Activated naive CD4-positive, alpha-beta T cell treated with anti-CD3 and anti-CD28 coated beads for 36 hours (primary cell): ENCODE measurements at regions of chr7 and their contacts with region 1.

Region 1: GRCh38 chr7:101688183-101688831 is 59.2 kb upstream of the MYL10 start:
- DNase-seq: peak; percentile 84
- H3K4me3 Mint-ChIP-seq: no peak overlapping the region
- H3K27ac Mint-ChIP-seq: no peak overlapping the region
- H3K4me1 Mint-ChIP-seq: no peaks in the 10 kb centered on the region
- H3K27me3 Mint-ChIP-seq: no peaks in the 10 kb centered on the region

Region 2: DNA sequence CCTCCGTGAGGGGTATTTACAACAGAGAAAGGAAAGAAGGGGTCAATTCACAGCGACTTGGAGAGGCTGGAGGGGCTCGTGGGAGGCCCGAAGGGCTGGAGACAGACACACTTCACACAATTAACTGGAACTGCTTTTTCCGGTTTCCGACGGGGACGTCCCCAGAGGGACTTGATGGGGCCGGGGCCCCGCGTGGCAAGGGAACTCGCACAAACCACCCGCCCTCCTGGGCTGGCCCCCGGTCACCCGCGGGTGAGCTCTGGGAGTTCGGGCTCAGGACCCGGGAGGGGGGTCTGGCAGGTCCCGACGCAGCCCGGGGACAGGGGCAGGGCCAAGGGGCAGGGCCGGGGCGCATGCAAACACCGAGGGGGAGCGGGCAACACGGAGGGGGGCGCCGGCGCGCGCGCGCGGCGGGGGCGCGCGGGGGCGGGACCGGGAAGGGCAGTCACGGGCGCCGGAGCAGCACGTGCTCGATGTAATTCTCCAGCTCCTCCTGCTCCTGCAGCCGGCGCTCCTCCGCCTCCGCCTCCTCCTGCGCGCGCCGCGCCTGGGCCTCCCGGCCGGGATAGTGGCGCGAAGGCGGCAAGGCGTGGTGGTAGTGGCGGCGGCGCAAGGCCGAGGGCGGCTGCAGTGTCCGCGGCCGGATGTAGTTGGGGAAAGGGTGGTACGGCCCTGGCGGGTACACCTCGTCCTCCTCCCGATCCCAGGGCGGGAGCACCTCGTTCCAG is 525.6 kb before region 1 on chr7:
- CTCF ChIA-PET with region 1: no interaction called
- intact Hi-C with region 1: no loop called
- DNase-seq: no peak
- H3K4me3 Mint-ChIP-seq: peak overlapping the region; percentile 36
- H3K27ac Mint-ChIP-seq: no peak overlapping the region
- H3K4me1 Mint-ChIP-seq: peaks cover 38% of the 10 kb centered on the region
- H3K27me3 Mint-ChIP-seq: peaks cover 41% of the 10 kb centered on the region

Region 3: GRCh38 chr7:101273206-101273605 is 415.1 kb before region 1 on chr7:
- CTCF ChIA-PET with region 1: no interaction called
- intact Hi-C with region 1: no loop called
- DNase-seq: no peak
- H3K4me3 Mint-ChIP-seq: no peak overlapping the region
- H3K27ac Mint-ChIP-seq: no peak overlapping the region
- H3K4me1 Mint-ChIP-seq: no peaks in the 10 kb centered on the region
- H3K27me3 Mint-ChIP-seq: peaks cover 7% of the 10 kb centered on the region

Region 4: GRCh38 chr7:101558742-101559325 is 129.5 kb before region 1 on chr7:
- CTCF ChIA-PET with region 1: no interaction called
- intact Hi-C with region 1: no loop called
- DNase-seq: peak; percentile 12
- H3K4me3 Mint-ChIP-seq: no peak overlapping the region
- H3K27ac Mint-ChIP-seq: no peak overlapping the region
- H3K4me1 Mint-ChIP-seq: no peaks in the 10 kb centered on the region
- H3K27me3 Mint-ChIP-seq: peaks cover 4% of the 10 kb centered on the region

Region 5: GRCh38 chr7:101625031-101625791 is 63.1 kb before region 1 on chr7:
- CTCF ChIA-PET with region 1: no interaction called
- intact Hi-C with region 1: no loop called
- DNase-seq: no peak
- H3K4me3 Mint-ChIP-seq: no peak overlapping the region
- H3K27ac Mint-ChIP-seq: no peak overlapping the region
- H3K4me1 Mint-ChIP-seq: no peaks in the 10 kb centered on the region
- H3K27me3 Mint-ChIP-seq: peaks cover 12% of the 10 kb centered on the region

Region 6: GRCh38 chr7:102236592-102237287 is 548.4 kb after region 1 on chr7:
- CTCF ChIA-PET with region 1: interaction called, 3 read pairs
- intact Hi-C with region 1: loop called (anchors 1 kb)
- DNase-seq: peak; percentile 67
- H3K4me3 Mint-ChIP-seq: no peak overlapping the region
- H3K27ac Mint-ChIP-seq: no peak overlapping the region
- H3K4me1 Mint-ChIP-seq: no peaks in the 10 kb centered on the region
- H3K27me3 Mint-ChIP-seq: no peaks in the 10 kb centered on the region

Region 7: DNA sequence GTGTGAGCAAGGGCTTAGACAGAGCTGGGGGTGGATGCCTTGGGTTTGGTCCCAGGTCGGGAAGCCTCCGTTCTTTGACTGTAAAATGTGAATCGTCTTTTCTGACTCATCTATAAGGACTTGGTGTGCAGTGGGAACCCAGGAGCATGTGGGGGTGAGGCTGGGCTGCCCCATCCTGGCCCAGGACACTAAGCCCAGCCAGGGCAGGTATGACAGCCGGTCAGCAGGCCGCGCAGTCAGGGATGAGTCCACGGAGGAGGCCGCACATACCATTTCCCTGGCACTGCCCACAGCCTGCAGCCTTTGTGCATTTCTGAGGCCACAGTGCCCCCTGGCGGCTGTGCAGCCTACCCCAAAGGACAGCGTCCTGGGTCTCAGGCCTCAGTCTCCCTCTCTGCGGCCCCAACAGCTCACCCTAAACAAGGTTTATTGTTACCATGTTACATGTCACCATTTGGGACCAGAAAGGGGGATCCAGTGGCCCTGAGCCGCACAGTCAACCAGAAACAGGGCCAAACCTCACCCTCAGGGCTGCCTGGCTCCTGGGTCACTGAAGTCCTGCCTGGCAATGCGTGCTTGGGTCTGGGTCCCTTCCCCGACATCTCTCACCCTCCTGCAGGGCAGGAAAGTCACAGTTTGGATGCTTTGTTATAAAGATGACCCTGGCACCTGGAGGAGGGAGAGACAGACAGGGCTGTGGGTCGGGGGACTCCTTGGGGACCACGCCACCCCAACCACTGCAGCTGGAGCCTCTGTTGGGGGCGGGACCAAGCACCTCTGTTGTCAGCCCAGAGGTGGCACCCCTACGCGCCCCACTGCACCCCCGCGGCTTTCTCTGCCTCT is 584.0 kb after region 1 on chr7:
- CTCF ChIA-PET with region 1: no interaction called
- intact Hi-C with region 1: loop called (anchors 1 kb)
- DNase-seq: peak; percentile 83
- H3K4me3 Mint-ChIP-seq: no peak overlapping the region
- H3K27ac Mint-ChIP-seq: no peak overlapping the region
- H3K4me1 Mint-ChIP-seq: peaks cover 3% of the 10 kb centered on the region
- H3K27me3 Mint-ChIP-seq: no peaks in the 10 kb centered on the region